ENCODE measurements at regions of chr4 and their contacts with region 1.

Region 1: DNA sequence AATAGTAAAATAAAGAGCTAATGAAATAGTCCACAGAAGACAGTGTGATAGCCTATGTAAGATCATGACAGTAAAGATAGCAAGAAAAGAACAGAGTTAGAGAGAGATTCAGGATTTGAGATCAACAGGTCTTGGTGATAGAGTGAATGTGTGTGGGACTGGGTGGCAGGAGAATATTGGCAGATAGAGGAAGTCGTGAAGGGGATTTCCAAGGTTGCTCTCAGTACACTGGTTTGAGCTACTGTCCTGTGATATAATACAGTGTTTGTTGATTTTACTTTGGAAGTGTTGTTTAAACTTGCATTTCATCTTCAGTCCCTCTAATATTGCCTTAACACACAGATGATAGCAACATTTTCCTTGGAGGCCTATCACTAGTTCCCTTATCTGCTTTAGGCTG is 44.1 kb downstream of the DTHD1 start:
- DNase-seq: no peak
- ATAC-seq: peak; percentile 94
- H3K4me3 Mint-ChIP-seq: peak overlapping the region; percentile 64
- H3K27ac Mint-ChIP-seq: peak overlapping the region; percentile 90
- H3K4me1 Mint-ChIP-seq: peaks cover 75% of the 10 kb centered on the region
- H3K27me3 Mint-ChIP-seq: no peaks in the 10 kb centered on the region
- CTCF ChIP-seq: no peak

Region 2: DNA sequence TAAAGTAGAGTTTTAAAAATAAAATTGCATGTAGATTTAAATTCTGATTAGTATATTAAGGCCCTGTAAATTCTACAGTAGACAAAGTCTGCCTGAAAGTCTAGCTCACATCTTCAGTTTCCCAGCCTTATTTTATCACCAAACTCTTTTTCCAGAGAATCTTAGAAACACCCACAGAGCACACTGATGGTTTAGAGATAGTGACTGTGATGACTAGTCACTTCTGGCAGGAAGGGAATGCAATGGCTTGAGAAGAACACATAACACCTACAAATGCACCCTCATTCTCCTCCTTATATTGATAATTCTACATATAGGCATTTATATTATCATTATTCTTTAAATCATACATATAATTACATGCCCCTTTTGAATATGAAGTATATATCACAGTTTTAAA is 314.1 kb before region 1 on chr4:
- CTCF ChIA-PET with region 1: no interaction called
- POLR2A ChIA-PET with region 1: no interaction called
- intact Hi-C with region 1: no loop called
- DNase-seq: no peak
- ATAC-seq: no peak
- H3K4me3 Mint-ChIP-seq: no peak overlapping the region
- H3K27ac Mint-ChIP-seq: no peak overlapping the region
- H3K4me1 Mint-ChIP-seq: no peaks in the 10 kb centered on the region
- H3K27me3 Mint-ChIP-seq: no peaks in the 10 kb centered on the region
- CTCF ChIP-seq: no peak

Region 3: DNA sequence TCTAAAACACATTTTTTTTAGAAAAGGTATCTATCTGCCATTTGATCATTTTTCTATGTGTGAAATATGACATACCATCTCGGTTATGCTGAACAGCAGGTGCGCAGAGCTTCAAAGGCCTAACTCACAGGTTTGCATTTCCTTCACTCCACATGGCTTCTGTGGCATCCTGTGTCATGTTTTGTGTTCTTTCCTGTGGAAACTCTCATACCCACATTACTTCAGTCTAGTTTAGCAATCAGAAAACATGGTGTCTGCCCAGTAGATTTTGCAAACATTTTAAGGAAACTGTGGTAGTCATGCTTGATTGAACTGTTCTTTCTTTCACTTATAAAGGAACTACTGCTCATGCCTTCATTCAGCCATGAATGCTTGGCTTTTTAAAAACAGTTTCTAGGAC is 69.9 kb before region 1 on chr4:
- CTCF ChIA-PET with region 1: no interaction called
- POLR2A ChIA-PET with region 1: interaction called, 6 read pairs
- intact Hi-C with region 1: loop called (anchors 2 kb)
- DNase-seq: no peak
- ATAC-seq: peak; percentile 90
- H3K4me3 Mint-ChIP-seq: peak overlapping the region; percentile 81
- H3K27ac Mint-ChIP-seq: peak overlapping the region; percentile 95
- H3K4me1 Mint-ChIP-seq: peaks cover 32% of the 10 kb centered on the region
- H3K27me3 Mint-ChIP-seq: no peaks in the 10 kb centered on the region
- CTCF ChIP-seq: no peak

Region 4: DNA sequence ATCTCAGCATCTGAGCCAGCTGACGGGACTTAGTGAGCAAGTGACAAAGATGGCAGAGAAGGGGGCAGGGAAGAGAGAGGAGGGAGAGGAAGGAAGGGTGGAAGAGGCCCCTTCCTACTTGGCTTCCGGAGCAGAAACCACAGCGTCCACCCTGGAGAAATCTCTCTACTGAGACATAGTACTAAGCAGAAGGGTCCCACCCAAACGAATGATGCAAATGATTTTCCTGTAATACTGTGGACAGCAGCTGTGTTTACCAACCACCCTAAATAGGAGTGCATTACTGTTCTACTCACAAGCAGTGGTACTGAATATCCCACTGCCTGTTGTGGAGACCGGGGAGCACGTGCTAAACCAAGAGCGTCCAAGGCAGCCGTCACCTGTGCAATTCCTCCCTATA is 14.7 kb before region 1 on chr4:
- CTCF ChIA-PET with region 1: no interaction called
- POLR2A ChIA-PET with region 1: interaction called, 9 read pairs
- intact Hi-C with region 1: loop called (anchors 1 kb)
- DNase-seq: no peak
- ATAC-seq: peak; percentile 65
- H3K4me3 Mint-ChIP-seq: peak overlapping the region; percentile 66
- H3K27ac Mint-ChIP-seq: peak overlapping the region; percentile 63
- H3K4me1 Mint-ChIP-seq: peaks cover 63% of the 10 kb centered on the region
- H3K27me3 Mint-ChIP-seq: no peaks in the 10 kb centered on the region
- CTCF ChIP-seq: no peak

Region 5: DNA sequence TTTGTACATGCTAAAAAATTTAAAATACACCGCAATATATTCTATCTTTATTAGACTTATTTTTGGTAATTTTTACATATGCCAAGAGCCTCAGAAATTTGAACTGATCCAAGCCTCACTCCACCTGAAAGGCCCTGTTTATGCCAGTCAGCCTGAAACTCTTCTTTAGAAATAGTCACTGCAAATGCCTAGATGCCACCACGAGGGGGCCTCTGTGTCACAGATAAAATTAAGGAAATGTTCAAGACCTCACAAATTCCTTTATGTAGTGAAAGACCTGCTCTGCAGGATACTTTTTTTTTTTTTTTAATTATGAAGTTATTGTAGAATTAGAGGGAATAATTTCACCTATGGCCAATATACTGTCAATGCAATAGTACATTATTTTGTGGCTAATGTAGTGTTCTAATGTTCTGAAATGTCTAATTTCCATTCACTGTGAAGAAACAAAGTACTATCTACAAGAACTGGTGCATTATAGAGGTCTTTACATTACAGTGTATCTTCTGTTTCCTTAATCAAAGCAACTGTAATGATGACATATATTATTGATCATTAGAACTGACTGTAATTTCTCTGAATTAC is 25.7 kb after region 1 on chr4:
- CTCF ChIA-PET with region 1: interaction called, 6 read pairs
- POLR2A ChIA-PET with region 1: interaction called, 9 read pairs
- intact Hi-C with region 1: loop called (anchors 1 kb)
- DNase-seq: peak; percentile 29
- ATAC-seq: peak; percentile 49
- H3K4me3 Mint-ChIP-seq: no peak overlapping the region
- H3K27ac Mint-ChIP-seq: no peak overlapping the region
- H3K4me1 Mint-ChIP-seq: peaks cover 22% of the 10 kb centered on the region
- H3K27me3 Mint-ChIP-seq: no peaks in the 10 kb centered on the region
- CTCF ChIP-seq: peak; percentile 91

Region 6: DNA sequence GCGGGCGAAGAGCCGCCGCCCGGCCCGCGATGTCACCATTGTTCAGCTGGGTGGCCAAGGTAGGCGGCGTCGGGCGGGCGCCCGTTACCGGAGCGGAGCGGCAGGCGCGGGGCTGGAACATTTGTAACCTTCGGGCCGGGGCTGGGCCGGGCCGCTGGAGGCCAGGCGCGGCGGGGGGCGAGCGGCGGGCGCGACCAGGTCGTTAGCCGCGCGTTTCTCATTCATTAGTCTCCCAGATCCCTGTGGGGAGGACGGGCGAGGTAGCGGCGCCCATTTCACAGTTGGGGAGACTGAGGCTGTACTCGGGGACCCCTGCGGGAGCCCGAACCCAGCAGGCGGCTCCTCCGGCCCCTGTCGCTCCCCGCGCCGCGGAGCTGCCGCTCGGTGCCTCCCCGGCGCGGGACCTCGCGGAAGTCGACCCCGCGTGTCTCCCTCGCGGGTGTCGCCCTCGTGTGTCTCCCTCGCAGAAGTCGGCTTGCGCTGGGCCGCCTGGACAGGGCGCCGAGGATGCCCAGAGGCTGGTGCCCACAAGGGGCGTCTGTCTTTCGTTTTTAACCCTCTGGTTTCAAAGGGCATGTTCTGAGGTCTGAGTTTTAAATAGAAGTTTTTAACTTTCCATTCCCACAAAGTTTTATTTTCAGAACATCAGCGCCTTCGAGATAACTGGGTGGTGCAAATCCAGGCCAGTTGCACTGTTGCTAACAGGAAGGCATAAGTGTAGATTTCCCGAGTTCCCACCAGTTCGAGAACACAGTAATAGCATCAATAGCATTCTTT is 1652.2 kb after region 1 on chr4:
- CTCF ChIA-PET with region 1: no interaction called
- POLR2A ChIA-PET with region 1: no interaction called
- intact Hi-C with region 1: no loop called
- DNase-seq: peak; percentile 62
- ATAC-seq: peak; percentile 73
- H3K4me3 Mint-ChIP-seq: peak overlapping the region; percentile 86
- H3K27ac Mint-ChIP-seq: peak overlapping the region; percentile 82
- H3K4me1 Mint-ChIP-seq: peaks cover 57% of the 10 kb centered on the region
- H3K27me3 Mint-ChIP-seq: no peaks in the 10 kb centered on the region
- CTCF ChIP-seq: no peak